HEK293 (cell line): ENCODE measurements at regions of chr7 and their contacts with region 1.

Region 1: GRCh38 chr7:131859147-131859821 is 302.9 kb upstream of the PODXL start:
- H3K4me3 ChIP-seq: no peak overlapping the region
- H3K27ac ChIP-seq: no peak overlapping the region
- H3K4me1 ChIP-seq: no peaks in the 10 kb centered on the region
- CTCF ChIP-seq: peak; percentile 78; the same call in 1 of the 2 replicates

Region 2: DNA sequence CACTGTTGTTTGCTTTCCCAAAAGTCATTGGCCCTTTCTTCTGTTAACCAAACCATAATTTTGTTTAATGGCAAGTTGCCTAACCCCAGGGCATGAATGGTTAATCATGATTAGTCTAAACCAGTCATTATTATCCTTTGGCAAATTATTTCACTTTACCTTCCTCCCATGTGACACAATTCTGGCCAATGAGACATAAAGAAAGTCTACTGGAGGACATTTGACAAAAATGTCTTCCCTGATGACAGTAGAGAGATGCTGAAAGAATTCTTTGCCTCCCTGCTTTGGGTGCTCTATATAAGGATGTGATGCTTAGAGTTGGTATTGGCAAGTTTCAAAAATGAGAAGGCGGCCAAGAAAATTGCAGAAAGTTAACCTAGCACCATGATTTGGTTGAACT is 404.7 kb before region 1 on chr7:
- CTCF ChIA-PET with region 1: no interaction called
- POLR2A ChIA-PET with region 1: no interaction called
- H3K4me3 ChIP-seq: no peak overlapping the region
- H3K27ac ChIP-seq: no peak overlapping the region
- H3K4me1 ChIP-seq: no peaks in the 10 kb centered on the region
- CTCF ChIP-seq: no peak

Region 3: DNA sequence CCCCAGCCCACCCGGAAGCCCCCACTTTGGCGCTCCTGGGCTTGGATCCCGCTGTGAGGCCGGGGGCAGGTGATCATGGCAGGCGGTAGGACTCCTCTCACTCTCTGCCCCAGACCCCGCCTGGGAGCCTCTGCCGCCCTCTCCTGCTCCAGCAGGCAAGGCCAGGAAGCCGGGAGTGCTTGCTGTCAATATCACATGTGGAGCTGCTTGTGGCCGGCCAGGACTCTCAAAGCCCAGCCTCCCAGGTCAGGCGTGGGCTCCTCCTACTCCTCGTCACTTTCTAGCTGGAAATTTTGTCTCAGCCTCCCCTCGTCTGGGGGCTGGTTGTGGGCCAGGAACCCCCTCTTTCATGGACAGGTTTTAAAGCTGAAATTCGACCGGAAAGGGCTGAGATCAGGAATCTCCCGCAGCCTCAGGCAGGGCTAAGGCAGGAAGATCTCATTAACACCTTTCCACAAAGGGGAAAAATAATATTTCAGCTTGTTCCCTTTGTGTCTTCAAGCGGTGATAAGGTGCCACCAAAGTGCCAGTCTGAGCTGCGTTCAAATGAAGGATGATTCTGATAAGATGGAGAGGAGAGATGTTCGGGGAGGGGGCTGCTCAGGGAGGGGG is 29.2 kb before region 1 on chr7:
- CTCF ChIA-PET with region 1: interaction called, 10 read pairs
- POLR2A ChIA-PET with region 1: no interaction called
- H3K4me3 ChIP-seq: no peak overlapping the region
- H3K27ac ChIP-seq: no peak overlapping the region
- H3K4me1 ChIP-seq: no peaks in the 10 kb centered on the region
- CTCF ChIP-seq: no peak

Region 4: DNA sequence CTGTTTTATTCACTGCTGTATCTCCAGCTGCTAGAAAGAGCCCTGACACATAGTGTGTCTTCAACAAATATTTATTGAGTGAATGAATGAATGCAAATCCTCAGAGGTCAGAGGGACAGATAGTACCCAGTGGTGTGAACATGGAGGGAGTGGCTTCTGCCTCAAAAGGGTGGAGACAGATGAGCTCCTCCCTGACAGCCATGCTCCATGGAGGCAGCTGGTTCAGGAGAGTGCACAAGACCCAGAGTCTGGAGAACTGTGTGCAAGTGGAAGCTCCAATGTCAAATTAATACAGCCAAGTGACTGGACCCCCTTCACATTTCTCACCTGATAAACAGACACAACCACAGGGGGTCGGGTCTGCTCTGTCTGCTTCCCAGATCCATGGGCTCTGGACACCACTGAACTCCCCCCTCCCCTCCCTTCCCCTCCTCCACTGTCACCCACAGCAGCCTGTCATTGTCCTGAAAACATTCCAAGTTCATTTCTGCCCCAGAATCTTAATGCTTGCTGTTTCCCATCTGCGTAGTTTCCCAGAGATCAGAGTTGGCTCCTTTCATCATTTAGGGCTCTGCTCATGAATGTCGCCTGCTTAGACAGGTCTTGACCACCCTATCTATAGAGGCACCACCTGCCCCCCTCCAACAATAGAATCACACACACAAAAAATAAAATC is 10.0 kb after region 1 on chr7:
- CTCF ChIA-PET with region 1: interaction called, 25 read pairs
- POLR2A ChIA-PET with region 1: no interaction called
- H3K4me3 ChIP-seq: no peak overlapping the region
- H3K27ac ChIP-seq: no peak overlapping the region
- H3K4me1 ChIP-seq: no peaks in the 10 kb centered on the region
- CTCF ChIP-seq: no peak

Region 5: GRCh38 chr7:131937868-131938267 is 78.6 kb after region 1 on chr7:
- CTCF ChIA-PET with region 1: interaction called, 10 read pairs
- POLR2A ChIA-PET with region 1: no interaction called
- H3K4me3 ChIP-seq: no peak overlapping the region
- H3K27ac ChIP-seq: no peak overlapping the region
- H3K4me1 ChIP-seq: no peaks in the 10 kb centered on the region; the same call in 1 of the 2 replicates
- CTCF ChIP-seq: no peak